Cardiac septum (tissue), 1 donor: ENCODE measurements at regions of chr4 and their contacts with region 1.

Region 1: GRCh38 chr4:141346144-141346543 is 125.4 kb downstream of the ZNF330 start:
- DNase-seq: no peak

Region 2: DNA sequence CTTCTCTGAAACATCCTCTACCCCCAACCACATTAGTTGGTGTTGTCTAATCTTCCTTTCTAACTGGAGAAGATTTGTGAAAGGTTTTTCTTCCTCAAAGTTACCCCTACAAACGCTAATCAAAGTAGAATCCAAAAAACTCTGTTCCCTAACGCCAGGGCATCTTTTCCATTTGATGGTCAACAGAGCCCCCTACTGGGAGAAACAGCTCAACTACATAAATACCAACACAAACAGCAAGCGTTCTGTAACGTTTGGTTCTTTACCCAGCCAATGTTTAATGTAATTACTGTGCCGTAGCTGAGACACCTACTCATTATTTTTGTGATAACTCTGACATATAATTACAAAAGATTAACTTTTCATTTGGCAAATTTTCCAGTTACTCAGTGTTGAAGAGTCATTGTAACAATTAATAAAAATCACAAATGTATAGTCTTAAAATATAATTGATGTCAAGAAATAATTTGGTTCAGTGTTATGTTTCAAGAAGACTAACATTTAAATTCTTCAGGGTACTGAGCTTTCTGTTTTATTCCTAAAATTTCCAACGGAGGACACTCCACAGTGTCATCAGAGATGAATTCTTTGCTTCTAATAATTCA is 495.0 kb before region 1 on chr4:
- intact Hi-C with region 1: no loop called
- DNase-seq: no peak

Region 3: GRCh38 chr4:141711014-141711610 is 365.0 kb after region 1 on chr4:
- intact Hi-C with region 1: loop called (anchors 5 kb)
- DNase-seq: no peak